Psoas muscle (tissue), 8 donors: ENCODE measurements at regions of chr5 and their contacts with region 1.

Region 1: GRCh38 chr5:39015743-39016586 is 58.2 kb downstream of the RICTOR start:
- DNase-seq: no peak
- ATAC-seq: peak; percentile 72 to 83 (median 73)
- H3K4me3 ChIP-seq: peak overlapping the region; percentile 20
- H3K27ac ChIP-seq: peak overlapping the region; percentile 96
- H3K4me1 ChIP-seq: peaks cover 41% of the 10 kb centered on the region
- H3K27me3 ChIP-seq: no peaks in the 10 kb centered on the region
- CTCF ChIP-seq: no peak

Region 2: GRCh38 chr5:38968665-38969064 is 47.3 kb before region 1 on chr5:
- intact Hi-C with region 1: no loop called
- DNase-seq: no peak
- ATAC-seq: peak in 1 of 4 donors; percentile 41
- H3K4me3 ChIP-seq: no peak overlapping the region
- H3K27ac ChIP-seq: no peak overlapping the region
- H3K4me1 ChIP-seq: no peaks in the 10 kb centered on the region
- H3K27me3 ChIP-seq: no peaks in the 10 kb centered on the region
- CTCF ChIP-seq: no peak

Region 3: DNA sequence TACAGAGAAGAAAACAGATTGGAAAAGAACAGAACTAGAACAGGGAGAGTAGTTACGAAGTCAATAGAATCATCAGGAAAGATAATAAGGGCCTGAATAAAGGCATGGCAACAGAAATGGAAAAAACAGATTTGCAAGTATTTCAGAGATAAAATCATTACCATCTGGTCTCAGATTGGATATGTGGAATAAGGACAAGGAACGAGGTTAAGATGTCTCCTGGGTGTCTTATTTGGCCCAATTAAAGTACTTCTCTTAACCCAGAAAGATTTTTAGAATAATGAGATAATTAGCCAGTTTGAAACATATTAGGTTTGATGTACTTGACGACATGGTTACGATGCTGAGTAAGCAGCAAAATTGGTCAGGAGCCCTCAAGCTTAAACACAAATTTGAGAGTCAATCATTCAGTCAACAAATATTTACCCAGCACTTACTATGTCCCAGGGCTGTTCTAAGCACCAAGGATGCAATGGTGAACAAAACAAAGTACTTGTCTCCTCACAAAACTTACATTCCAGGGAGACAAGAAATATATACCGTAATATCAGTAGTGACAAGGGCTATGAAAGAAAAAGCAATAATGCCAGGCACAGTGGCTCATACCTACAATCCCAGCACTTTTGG is 39.9 kb after region 1 on chr5:
- intact Hi-C with region 1: no loop called
- DNase-seq: no peak
- ATAC-seq: no peak
- H3K4me3 ChIP-seq: no peak overlapping the region
- H3K27ac ChIP-seq: no peak overlapping the region
- H3K4me1 ChIP-seq: peaks cover 62% of the 10 kb centered on the region
- H3K27me3 ChIP-seq: no peaks in the 10 kb centered on the region
- CTCF ChIP-seq: no peak

Region 4: GRCh38 chr5:39068099-39068498 is 52.1 kb after region 1 on chr5:
- intact Hi-C with region 1: loop called in 1 of 2 experiments (anchors 5 kb)
- DNase-seq: no peak
- ATAC-seq: no peak
- H3K4me3 ChIP-seq: no peak overlapping the region
- H3K27ac ChIP-seq: peak overlapping the region; percentile 26
- H3K4me1 ChIP-seq: peaks cover 74% of the 10 kb centered on the region
- H3K27me3 ChIP-seq: no peaks in the 10 kb centered on the region
- CTCF ChIP-seq: no peak

Region 5: GRCh38 chr5:39074016-39074886 is 58.3 kb after region 1 on chr5 and contains the start of gene RICTOR:
- intact Hi-C with region 1: loop called (anchors 2 to 5 kb)
- DNase-seq: peak; percentile 93 to 96
- ATAC-seq: peak; percentile 88 to 96 (median 93)
- H3K4me3 ChIP-seq: peak within 1 kb of the TSS; percentile 74
- H3K27ac ChIP-seq: peak within 1 kb of the TSS; percentile 93
- H3K4me1 ChIP-seq: peaks cover 42% of the 10 kb centered on the region
- H3K27me3 ChIP-seq: no peaks in the 10 kb centered on the region
- CTCF ChIP-seq: peak; percentile 5
- total RNA-seq, gene RICTOR: 34.0 to 46.7 (median 41.0) TPM

Region 6: DNA sequence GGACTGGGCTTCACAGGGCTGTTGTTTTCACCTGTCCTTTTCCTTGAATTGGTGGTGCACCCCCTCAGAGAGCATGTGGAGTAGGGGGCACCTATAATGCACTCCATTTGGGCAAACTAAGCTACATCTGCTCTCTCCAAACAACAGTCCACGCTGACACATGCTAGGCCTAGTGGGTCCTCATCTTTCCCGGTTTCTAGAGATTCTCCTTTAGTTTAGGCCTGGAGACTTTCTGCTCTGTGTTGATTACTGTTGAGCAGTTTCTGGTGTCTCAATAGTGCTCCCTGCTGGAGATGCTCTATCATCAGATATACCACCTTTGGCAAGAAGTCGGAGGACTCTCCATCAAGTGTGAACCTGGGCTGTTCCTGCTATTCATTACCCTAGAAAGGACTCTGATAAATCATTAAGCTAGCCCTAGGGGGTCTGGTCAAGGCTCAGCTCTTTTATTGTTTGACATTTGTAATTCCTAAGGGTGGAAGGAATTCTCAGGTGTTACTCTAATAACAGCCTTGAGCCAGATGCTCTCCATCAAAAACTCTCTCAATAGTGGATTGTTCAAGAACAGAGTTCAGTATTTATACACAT is 267.4 kb after region 1 on chr5:
- intact Hi-C with region 1: no loop called
- DNase-seq: no peak
- ATAC-seq: peak; percentile 65 to 94 (median 82)
- H3K4me3 ChIP-seq: no peak overlapping the region
- H3K27ac ChIP-seq: no peak overlapping the region
- H3K4me1 ChIP-seq: peaks cover 5% of the 10 kb centered on the region
- H3K27me3 ChIP-seq: peaks cover 0 to 2% (median 0%) of the 10 kb centered on the region in 3 donors
- CTCF ChIP-seq: peak; percentile 66

Region 7: DNA sequence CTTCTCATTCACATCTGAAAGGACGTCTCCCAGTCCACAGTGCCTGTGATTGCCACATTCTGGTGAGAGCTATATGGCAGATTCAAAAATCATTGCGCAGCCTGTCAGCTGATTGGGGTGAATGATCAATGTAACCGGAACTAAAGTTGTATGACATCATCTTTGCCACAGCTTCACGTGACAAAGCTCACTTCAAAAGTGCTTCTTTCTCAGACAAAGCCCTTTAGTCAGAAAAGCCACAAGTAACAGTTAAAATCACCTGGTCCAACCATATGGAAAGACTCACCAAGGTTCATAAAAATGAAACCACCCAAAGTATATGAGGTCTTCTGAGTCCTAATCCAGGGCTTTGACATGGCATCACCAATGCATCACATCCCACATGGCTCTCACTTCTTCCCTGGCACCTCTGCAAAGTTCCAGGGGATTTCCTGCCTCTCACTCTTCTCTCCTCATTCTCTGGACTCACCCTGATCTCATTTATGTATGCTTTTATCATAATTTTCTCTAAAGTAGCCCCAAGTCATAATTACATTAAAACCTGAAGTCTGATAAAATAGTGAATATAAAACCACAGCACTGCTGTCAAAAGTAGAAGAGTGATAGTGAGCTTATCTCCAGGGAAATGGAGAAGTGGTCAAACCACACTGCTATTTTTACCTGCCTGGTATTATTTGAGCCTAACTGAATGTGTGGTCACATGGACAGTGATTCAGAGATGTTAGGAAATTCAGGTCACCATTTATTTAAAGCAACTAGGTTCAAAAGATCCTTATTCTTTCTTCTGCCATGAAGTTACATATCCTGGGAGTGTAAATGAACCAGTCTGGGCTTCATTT is 1470.7 kb after region 1 on chr5:
- intact Hi-C with region 1: no loop called
- DNase-seq: no peak
- ATAC-seq: peak in 3 of 4 donors; percentile 56 to 86 (median 65)
- H3K4me3 ChIP-seq: no peak overlapping the region
- H3K27ac ChIP-seq: no peak overlapping the region
- H3K4me1 ChIP-seq: no peaks in the 10 kb centered on the region
- H3K27me3 ChIP-seq: no peaks in the 10 kb centered on the region
- CTCF ChIP-seq: no peak